A549 (cell line): ENCODE measurements at regions of chr3 and their contacts with region 1.

Region 1: DNA sequence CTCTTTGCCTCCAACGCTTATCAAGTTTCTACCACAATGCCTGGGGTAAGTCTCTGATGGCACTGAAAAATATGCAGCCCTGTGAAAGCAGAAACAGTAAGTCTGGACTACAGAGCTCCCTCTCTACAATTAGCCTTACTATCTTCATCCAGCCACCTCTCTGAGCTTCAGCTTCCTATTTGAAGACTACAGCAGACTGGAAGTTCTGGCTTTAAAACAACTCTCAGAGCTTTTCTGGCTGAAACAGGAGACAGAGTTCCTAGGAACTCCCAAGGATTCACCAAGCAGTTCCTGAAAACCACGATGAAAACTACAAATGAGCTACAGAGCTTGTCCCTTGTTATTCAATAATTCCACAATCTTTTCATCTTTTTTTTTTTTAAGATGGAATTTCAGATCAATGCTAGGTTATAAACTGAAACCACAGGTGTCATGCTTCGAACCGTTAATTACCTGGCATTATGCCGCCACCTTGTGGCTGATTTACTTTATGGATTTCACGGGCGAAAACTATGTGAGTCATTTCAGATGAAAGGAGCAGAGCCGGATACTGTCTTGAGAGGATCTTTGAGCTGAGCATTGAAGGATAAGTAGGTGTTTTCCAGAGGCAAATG is 3.9 kb downstream of the CRYGS start:
- DNase-seq: peak; percentile 52 to 59
- ATAC-seq: peak; percentile 70 to 90; a peak in 5 of 6 replicates
- H3K4me3 ChIP-seq: no peak overlapping the region
- H3K27ac ChIP-seq: no peak overlapping the region
- H3K4me1 ChIP-seq: no peaks in the 10 kb centered on the region
- CTCF ChIP-seq: peak; percentile 79
- EP300 ChIP-seq: no peak
- POLR2A ChIP-seq: no peak
- RAD21 ChIP-seq: peak; percentile 82 to 84

Region 2: GRCh38 chr3:185976977-185977678 is 563.2 kb before region 1 on chr3:
- CTCF ChIA-PET with region 1: interaction called, 11 read pairs
- POLR2A ChIA-PET with region 1: no interaction called
- DNase-seq: peak; percentile 42 to 71
- ATAC-seq: peak; percentile 84 to 88
- H3K4me3 ChIP-seq: no peak overlapping the region
- H3K27ac ChIP-seq: no peak overlapping the region
- H3K4me1 ChIP-seq: peaks cover 8% of the 10 kb centered on the region; the same call in 1 of the 3 replicates
- CTCF ChIP-seq: peak; percentile 83
- EP300 ChIP-seq: no peak
- POLR2A ChIP-seq: no peak
- RAD21 ChIP-seq: peak; percentile 47 to 50; a peak in 3 of 5 replicates

Region 3: DNA sequence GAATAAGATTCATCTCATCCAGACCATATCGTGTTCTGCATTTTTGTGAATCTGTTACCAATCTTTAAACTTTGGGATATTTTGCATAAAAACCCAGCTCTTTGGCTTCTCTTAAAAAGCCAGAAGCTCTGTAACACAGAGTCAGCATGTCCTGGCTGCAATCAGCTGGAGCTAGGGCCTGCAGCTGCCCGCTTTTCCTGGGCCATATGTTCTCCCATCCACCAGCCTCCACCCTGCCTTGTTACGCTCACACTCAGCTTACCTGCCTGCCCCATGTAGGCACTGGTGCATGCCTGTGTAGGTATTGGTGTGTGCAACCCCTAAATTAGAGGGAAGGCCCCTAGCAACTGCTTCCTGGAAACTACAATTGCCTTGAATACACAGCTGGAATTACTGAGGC is 44.3 kb before region 1 on chr3:
- CTCF ChIA-PET with region 1: no interaction called
- POLR2A ChIA-PET with region 1: no interaction called
- DNase-seq: no peak
- ATAC-seq: no peak
- H3K4me3 ChIP-seq: no peak overlapping the region
- H3K27ac ChIP-seq: no peak overlapping the region
- H3K4me1 ChIP-seq: no peaks in the 10 kb centered on the region
- CTCF ChIP-seq: no peak
- EP300 ChIP-seq: no peak
- POLR2A ChIP-seq: no peak
- RAD21 ChIP-seq: no peak

Region 4: DNA sequence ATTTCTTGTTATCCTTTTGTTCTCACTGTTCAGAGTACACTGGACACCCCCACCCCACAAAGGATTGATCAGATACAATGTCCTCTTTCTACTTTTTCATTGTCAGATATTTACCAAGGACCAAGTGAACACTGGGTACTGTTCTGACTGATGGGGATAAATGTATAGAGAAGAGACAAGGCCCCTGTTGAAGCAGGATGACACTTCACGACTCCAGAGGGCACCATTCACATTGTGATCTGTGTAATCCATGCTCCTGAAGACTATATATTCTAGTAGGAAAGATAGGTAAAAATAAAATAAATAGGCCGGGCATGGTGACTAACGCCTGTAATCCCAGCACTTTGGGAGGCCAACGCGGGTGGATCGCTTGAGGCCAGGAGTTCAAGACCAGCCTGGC is 11.1 kb after region 1 on chr3:
- CTCF ChIA-PET with region 1: interaction called, 21 read pairs
- POLR2A ChIA-PET with region 1: no interaction called
- DNase-seq: peak in 1 of 2 experiments; percentile 18
- ATAC-seq: peak in 1 of 2 experiments; percentile 31; a peak in 1 of 6 replicates
- H3K4me3 ChIP-seq: no peak overlapping the region
- H3K27ac ChIP-seq: no peak overlapping the region
- H3K4me1 ChIP-seq: no peaks in the 10 kb centered on the region
- CTCF ChIP-seq: no peak
- EP300 ChIP-seq: no peak
- POLR2A ChIP-seq: no peak
- RAD21 ChIP-seq: no peak

Region 5: DNA sequence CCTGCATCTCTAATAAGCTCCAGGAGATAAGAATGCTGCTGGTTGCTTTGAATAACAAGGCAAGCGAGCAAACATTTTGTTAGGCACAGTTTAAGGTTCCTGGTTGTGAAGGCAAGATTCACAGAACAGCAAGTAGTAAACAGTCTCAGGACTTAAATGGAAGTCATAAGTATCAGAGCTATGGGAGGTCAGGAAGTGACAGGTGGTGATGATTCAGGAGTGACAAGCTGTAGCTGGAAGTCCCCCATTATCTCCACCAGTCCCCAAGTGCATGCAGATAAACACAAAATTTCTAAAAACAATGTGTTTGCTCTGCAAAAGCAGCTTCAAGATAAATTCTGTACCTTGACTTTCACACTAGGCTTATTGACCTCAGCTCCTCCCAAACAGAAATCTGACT is 103.2 kb after region 1 on chr3:
- CTCF ChIA-PET with region 1: no interaction called
- POLR2A ChIA-PET with region 1: no interaction called
- DNase-seq: no peak
- ATAC-seq: no peak
- H3K4me3 ChIP-seq: no peak overlapping the region
- H3K27ac ChIP-seq: no peak overlapping the region
- H3K4me1 ChIP-seq: peaks cover 13% of the 10 kb centered on the region; the same call in 2 of the 3 replicates
- CTCF ChIP-seq: no peak
- EP300 ChIP-seq: no peak
- POLR2A ChIP-seq: no peak
- RAD21 ChIP-seq: no peak